Cardiac septum (tissue), 1 donor: ENCODE measurements at regions of chr6 and their contacts with region 1.

Region 1: DNA sequence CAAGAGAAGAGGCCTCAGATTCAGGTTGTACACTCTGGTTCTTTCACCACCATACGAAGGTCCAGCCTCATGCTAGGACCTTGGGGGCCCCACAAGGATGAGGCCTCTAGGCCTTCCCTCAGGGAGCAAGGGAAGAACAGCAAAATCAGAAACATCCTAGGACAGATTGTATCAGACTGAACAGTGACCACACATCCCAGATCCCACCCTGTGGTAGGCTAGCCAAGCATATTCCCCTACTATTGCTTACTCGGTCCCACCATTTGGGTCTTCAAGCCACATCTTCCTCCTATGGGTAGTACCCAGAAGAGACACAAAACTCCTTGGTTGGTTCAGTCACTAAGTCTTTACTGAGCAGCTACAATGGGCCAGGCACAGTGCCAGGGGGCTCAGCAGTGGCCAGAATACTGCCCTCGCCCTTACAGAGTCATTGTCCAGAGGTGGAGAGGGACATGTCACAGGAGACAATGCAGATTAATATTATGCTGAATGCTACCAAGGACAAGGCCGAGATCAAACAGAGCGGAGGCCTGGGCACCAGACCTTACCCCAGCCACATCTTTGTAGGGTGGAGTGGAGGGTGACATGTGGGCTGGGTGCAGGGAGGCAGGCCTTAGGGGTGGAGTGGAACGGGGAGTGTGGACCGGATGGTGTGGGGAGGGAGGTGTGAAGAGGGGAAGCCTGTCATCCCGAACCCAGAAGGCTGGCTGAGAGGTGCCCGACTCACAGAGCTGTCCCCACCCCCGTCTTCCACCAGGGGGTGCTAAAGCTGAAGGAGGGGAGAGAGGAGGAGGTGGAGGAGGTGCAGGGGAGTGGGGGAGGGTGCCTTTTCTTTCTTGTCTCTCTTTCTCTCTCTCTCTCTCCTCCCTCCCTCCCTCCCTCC is 6.8 kb upstream of the MAPK13 start:
- DNase-seq: peak; percentile 92

Region 2: DNA sequence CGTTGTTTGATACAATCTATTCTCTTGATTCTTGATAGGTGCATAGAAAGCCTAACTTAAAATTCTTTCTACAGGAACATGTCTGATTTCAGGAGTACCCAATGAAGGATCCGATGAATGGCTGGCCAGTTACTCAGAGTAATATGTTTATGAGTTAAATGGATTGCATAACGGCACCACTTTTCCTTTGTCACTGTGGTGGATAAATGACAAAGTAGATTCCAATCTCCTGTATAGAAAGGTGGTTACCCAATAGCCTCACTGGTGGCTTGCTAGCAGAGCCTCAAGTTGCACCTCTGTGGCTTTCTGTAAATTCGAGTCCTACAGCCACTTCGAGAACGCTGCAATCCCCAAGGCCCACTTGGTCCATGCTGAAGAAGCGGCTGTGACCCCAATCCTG is 290.0 kb before region 1 on chr6:
- intact Hi-C with region 1: no loop called
- DNase-seq: no peak

Region 3: GRCh38 chr6:36196880-36197548 is 73.5 kb after region 1 on chr6:
- intact Hi-C with region 1: loop called (anchors 5 kb)
- DNase-seq: peak; percentile 100

Region 4: DNA sequence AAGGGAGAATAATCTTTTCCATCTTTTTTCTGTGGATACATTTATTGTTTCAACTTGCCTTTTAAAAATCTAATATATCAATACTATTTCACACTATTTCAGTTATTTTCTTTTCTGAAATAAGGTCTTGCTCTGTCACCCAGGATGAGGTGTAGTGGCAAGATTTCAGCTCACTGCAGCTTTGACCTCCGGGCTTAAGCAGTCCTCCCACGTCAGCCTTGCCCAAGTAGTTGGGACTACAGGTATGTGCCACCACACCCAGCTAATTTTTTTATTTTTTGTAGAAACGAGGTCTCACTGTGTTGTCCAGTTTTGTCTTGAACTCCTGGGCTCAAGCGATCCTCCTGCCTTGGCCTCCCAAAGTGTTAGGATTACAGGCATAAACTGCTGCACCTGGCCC is 327.9 kb after region 1 on chr6:
- intact Hi-C with region 1: no loop called
- DNase-seq: no peak